ENCODE measurements at regions of chr5 and their contacts with region 1.

Region 1: DNA sequence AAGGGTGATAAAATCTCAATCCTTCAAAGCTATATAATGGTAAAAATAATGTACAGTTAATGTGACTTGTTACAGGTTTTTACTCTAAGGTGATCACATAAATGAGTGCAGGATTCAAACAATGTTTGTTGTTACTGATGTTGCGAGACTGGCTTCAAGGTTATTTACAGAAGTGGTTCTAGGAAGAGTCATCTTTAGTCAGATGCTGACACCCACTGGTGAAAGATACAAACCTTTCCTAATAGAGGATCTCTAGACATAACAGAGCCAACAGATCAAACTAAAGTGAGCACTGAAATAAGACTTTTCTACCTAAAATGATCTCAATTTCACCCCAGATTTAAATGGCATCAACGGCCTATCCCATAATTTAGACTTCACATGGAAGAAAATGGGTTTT is 20.2 kb downstream of the ARSB start:
- DNase-seq: peak in 1 of 2 experiments; percentile 55
- H3K4me3 ChIP-seq: no peak overlapping the region
- H3K27ac ChIP-seq: no peak overlapping the region
- H3K4me1 ChIP-seq: no peaks in the 10 kb centered on the region
- H3K27me3 ChIP-seq: no peaks in the 10 kb centered on the region
- CTCF ChIP-seq: peak; percentile 70

Region 2: GRCh38 chr5:78320401-78320800 is 644.5 kb before region 1 on chr5:
- CTCF ChIA-PET with region 1: no interaction called
- POLR2A ChIA-PET with region 1: no interaction called
- intact Hi-C with region 1: loop called (anchors 1 kb)
- DNase-seq: no peak
- H3K4me3 ChIP-seq: no peak overlapping the region
- H3K27ac ChIP-seq: no peak overlapping the region
- H3K4me1 ChIP-seq: no peaks in the 10 kb centered on the region
- H3K27me3 ChIP-seq: no peaks in the 10 kb centered on the region
- CTCF ChIP-seq: peak; percentile 67

Region 3: DNA sequence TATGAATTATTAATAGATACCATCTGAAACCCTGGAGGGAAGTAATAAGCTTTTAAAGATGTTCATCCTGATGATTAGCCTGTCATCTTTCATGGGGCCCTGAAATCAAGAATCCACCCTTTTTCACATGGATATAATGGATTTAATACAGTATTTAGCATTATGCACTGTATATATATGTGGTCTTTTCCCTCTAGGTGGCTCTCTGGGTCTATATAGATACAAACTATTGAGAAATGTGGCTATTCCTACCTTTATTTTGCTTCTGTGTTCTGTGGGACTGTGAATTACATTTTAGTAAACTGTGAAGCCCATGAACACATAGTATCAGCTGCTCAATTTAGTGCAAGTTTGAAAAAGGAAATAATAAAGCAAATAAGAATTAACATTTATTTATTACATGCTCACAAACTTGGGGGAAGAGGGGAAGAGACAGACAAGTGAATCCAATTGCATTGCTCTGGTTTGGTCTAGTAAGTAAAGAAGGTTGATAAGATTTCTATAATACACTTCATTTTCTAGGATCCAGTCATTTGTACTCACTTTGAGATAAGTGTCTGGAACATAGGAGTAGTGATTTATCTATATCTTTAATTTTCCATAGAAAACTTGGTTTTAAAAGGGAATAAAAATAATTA is 492.3 kb before region 1 on chr5:
- CTCF ChIA-PET with region 1: no interaction called
- POLR2A ChIA-PET with region 1: no interaction called
- intact Hi-C with region 1: loop called (anchors 2 kb)
- DNase-seq: no peak
- H3K4me3 ChIP-seq: no peak overlapping the region
- H3K27ac ChIP-seq: no peak overlapping the region
- H3K4me1 ChIP-seq: no peaks in the 10 kb centered on the region
- H3K27me3 ChIP-seq: no peaks in the 10 kb centered on the region
- CTCF ChIP-seq: peak; percentile 66

Region 4: DNA sequence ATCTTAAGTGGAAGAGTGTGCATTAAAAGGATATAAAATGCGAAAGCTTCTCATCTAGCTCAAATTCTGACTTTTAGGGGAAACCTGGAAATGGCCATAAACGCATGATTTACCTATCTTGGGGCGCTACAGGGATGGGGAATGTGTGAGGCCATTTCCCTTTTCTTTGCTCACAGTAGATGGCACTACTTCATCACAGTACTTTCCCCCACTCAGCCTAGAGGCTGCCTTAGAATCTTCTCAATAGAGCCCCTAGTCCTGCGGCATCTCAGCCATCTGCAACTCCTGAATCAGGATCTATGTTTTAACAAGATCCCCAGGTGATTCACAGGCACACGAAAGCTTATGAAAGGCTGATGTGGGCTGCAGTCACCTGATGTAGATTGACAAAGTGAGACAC is 427.1 kb before region 1 on chr5:
- CTCF ChIA-PET with region 1: interaction called, 3 read pairs
- POLR2A ChIA-PET with region 1: interaction called, 4 read pairs
- intact Hi-C with region 1: loop called (anchors 1 kb)
- DNase-seq: peak in 1 of 2 experiments; percentile 15
- H3K4me3 ChIP-seq: no peak overlapping the region
- H3K27ac ChIP-seq: no peak overlapping the region
- H3K4me1 ChIP-seq: no peaks in the 10 kb centered on the region
- H3K27me3 ChIP-seq: no peaks in the 10 kb centered on the region
- CTCF ChIP-seq: peak; percentile 52

Region 5: DNA sequence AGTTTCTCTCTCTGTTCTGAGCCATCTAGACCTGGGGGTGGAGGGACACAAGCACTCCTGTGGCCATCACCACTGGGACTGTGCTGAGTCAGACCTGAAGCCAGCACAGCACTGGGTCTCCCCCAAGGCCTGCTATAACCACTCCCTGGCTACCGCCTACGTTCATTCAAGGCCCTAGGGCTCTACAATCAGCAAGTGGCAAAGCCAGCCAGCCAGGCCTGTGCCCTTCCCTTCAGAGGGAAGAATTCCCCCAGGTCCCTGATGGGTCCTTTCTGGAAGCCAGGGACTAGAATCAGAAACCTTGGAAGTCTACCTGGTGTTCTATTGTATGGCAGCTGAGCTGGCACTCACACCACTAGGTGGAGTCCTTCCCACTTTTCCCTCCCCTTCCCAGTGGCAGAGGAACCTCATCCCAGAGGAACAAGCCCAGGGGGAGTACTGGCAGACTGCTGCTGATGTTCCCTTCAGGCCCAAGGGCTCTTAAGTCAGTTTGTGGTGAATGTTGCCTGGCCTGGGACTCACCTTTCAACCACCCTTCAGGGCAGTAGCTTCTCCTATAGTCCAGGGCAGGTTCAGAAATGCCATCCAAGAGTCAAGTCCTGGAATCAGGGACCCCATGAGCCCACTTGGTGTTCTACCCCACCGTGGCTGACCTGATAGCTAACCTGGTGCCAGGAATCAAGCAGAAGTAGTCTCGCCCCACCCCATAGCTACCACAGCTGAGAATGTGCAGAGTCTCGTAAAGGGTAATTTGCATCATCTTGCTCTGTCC is 291.1 kb after region 1 on chr5:
- CTCF ChIA-PET with region 1: no interaction called
- POLR2A ChIA-PET with region 1: no interaction called
- intact Hi-C with region 1: no loop called
- DNase-seq: peak in 1 of 2 experiments; percentile 7
- H3K4me3 ChIP-seq: no peak overlapping the region
- H3K27ac ChIP-seq: no peak overlapping the region
- H3K4me1 ChIP-seq: 0 out of 2 replicates have a peak, but pooled peaks cover 7% of the 10 kb centered on the region
- H3K27me3 ChIP-seq: no peaks in the 10 kb centered on the region
- CTCF ChIP-seq: peak; percentile 62

Region 6: GRCh38 chr5:79295029-79295428 is 330.1 kb after region 1 on chr5:
- CTCF ChIA-PET with region 1: no interaction called
- POLR2A ChIA-PET with region 1: no interaction called
- intact Hi-C with region 1: no loop called
- DNase-seq: no peak
- H3K4me3 ChIP-seq: no peak overlapping the region
- H3K27ac ChIP-seq: no peak overlapping the region
- H3K4me1 ChIP-seq: peaks cover 2% of the 10 kb centered on the region; the same call in 1 of the 2 replicates
- H3K27me3 ChIP-seq: no peaks in the 10 kb centered on the region
- CTCF ChIP-seq: no peak

Measured in PC-9 (cell line).